ENCODE measurements at regions of chr14 and their contacts with region 1.

Region 1: DNA sequence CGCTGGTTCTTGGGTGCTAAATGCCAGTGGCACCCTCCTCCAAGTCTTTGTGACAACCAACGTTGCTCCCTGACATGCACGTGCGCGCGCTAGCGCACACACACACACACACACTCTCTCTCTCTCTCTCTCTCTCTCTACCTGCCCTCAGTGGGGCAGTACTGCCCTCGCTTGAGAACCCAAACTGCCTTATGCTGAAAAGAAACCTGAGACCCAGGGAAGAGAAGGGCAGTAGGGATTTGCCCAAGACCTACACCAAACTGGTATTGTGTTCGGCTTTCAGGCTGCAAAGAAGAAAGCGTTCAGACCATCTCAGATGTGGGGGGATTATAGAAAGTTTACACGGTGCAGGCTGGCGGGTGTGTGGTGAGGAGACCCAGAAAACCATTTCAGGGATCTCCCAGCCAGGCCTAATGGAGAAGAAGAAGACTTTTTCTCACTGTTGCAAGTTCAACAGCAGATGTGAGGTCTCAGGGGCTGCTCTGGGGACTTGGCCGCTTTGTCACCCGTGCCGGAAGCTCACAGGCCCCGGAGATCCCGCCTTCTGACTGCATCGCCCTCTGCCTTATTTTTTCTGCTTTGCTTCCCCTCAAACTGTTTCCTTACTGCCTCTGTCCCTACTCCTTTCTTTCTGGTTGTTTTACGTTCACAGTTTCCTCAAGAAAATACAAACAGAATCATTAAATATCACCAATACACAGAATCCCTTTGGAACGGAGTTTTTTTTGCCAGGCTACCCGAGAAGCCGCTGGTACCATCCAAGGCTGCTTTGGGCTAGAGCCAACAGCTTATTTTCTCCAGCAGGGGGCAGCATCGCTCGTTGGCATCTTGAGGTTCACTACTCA is 82.4 kb downstream of the PPM1A start:
- DNase-seq: peak; percentile 91
- H3K4me3 Mint-ChIP-seq: peak overlapping the region; percentile 83
- H3K27ac Mint-ChIP-seq: peak overlapping the region; percentile 89
- H3K4me1 Mint-ChIP-seq: peaks cover 32% of the 10 kb centered on the region
- H3K27me3 Mint-ChIP-seq: peaks cover 17% of the 10 kb centered on the region

Region 2: GRCh38 chr14:60064491-60065072 is 266.8 kb before region 1 on chr14:
- CTCF ChIA-PET with region 1: no interaction called
- intact Hi-C with region 1: loop called (anchors 2 kb)
- DNase-seq: no peak
- H3K4me3 Mint-ChIP-seq: no peak overlapping the region
- H3K27ac Mint-ChIP-seq: no peak overlapping the region
- H3K4me1 Mint-ChIP-seq: no peaks in the 10 kb centered on the region
- H3K27me3 Mint-ChIP-seq: peaks cover 1% of the 10 kb centered on the region

Region 3: GRCh38 chr14:60212503-60213371 is 118.7 kb before region 1 on chr14:
- CTCF ChIA-PET with region 1: no interaction called
- intact Hi-C with region 1: no loop called
- DNase-seq: no peak
- H3K4me3 Mint-ChIP-seq: no peak overlapping the region
- H3K27ac Mint-ChIP-seq: no peak overlapping the region
- H3K4me1 Mint-ChIP-seq: no peaks in the 10 kb centered on the region
- H3K27me3 Mint-ChIP-seq: no peaks in the 10 kb centered on the region

Region 4: GRCh38 chr14:60266021-60266937 is 65.1 kb before region 1 on chr14:
- CTCF ChIA-PET with region 1: interaction called, 6 read pairs
- intact Hi-C with region 1: loop called (anchors 1 kb)
- DNase-seq: peak; percentile 34
- H3K4me3 Mint-ChIP-seq: no peak overlapping the region
- H3K27ac Mint-ChIP-seq: no peak overlapping the region
- H3K4me1 Mint-ChIP-seq: peaks cover 16% of the 10 kb centered on the region
- H3K27me3 Mint-ChIP-seq: no peaks in the 10 kb centered on the region

Region 5: DNA sequence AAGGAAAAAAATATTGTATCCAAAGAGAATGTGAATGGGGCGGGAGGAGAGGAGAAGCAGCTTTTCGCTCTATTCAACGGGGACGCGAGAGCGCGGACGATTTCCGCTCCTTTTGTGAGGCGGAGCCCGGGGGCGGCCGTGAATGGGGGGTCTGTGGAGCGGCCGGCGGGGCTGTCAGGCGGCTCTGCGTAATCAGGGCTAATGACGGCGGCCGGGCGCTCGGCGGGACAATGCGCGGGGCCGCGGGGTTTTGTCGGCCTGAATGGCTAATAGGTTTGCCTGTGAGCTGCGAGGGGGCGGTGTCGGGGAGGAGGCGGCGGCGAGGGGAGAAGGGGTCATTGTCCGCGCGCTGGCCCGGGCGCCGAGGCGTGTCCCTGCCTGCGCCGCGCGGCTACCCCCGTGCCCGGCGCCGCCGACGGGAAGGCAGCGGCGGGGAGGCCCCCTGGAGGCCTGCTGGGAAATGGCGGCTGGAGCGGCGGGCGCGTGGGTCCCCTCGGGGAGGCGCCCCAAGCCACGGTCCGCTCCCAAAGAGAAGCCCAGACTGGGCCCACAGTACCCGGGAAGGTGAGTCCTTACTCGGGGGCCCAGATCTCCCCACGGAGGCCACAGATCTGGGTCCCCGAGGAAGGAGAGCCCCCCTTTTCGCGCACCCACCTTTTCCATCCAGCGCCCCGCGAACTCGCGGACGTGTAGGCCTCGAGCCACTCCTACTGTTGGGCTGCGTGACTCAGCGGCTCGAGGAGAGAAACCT is 183.5 kb after region 1 on chr14:
- CTCF ChIA-PET with region 1: interaction called, 3 read pairs
- intact Hi-C with region 1: loop called (anchors 2 kb)
- DNase-seq: no peak
- H3K4me3 Mint-ChIP-seq: peak overlapping the region; percentile 49
- H3K27ac Mint-ChIP-seq: no peak overlapping the region
- H3K4me1 Mint-ChIP-seq: peaks cover 19% of the 10 kb centered on the region
- H3K27me3 Mint-ChIP-seq: peaks cover 62% of the 10 kb centered on the region

Region 6: GRCh38 chr14:60753264-60754119 is 422.1 kb after region 1 on chr14:
- CTCF ChIA-PET with region 1: no interaction called
- intact Hi-C with region 1: loop called (anchors 5 kb)
- DNase-seq: peak; percentile 78
- H3K4me3 Mint-ChIP-seq: peak overlapping the region; percentile 14
- H3K27ac Mint-ChIP-seq: peak overlapping the region; percentile 37
- H3K4me1 Mint-ChIP-seq: peaks cover 35% of the 10 kb centered on the region
- H3K27me3 Mint-ChIP-seq: peaks cover 2% of the 10 kb centered on the region

Region 7: DNA sequence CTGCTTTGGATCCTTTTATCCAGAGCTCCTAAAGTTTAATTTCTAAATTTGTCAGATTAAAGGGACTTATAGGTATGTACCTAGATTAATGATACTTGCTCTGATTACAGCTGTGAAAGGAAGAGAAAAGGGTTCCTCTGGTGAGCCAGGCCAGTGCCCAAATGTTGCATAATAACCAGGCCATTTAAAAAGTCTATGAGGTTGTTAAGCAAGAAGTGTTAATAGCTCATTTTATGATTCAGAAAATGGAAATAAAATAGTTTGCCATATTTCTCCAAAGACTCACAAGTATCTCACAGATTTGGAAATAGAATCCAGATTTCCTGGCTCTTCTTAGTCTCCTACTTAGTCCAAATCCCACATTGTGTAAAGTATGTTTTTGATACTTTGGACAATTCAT is 717.2 kb after region 1 on chr14:
- CTCF ChIA-PET with region 1: no interaction called
- intact Hi-C with region 1: no loop called
- DNase-seq: no peak
- H3K4me3 Mint-ChIP-seq: no peak overlapping the region
- H3K27ac Mint-ChIP-seq: no peak overlapping the region
- H3K4me1 Mint-ChIP-seq: no peaks in the 10 kb centered on the region
- H3K27me3 Mint-ChIP-seq: no peaks in the 10 kb centered on the region

Measured in activated naive CD4-positive, alpha-beta T cell treated with anti-CD3 and anti-CD28 coated beads for 36 hours (primary cell).